CD4-positive, alpha-beta T cell (primary cell): ENCODE measurements at regions of chr17 and their contacts with region 1.

Region 1: GRCh38 chr17:28041068-28041843 is 1.2 kb upstream of the NLK start:
- DNase-seq: peak; percentile 97 to 100 (median 99)
- ATAC-seq: peak; percentile 92
- H3K4me3 ChIP-seq: peak overlapping the region; percentile 84
- H3K4me3 Mint-ChIP-seq: peak overlapping the region; percentile 93
- H3K27ac ChIP-seq: peak overlapping the region; percentile 52 to 69
- H3K27ac Mint-ChIP-seq: peak overlapping the region; percentile 82
- H3K4me1 ChIP-seq: peaks cover 30% of the 10 kb centered on the region
- H3K4me1 Mint-ChIP-seq: peaks cover 57% of the 10 kb centered on the region
- H3K27me3 ChIP-seq: no peaks in the 10 kb centered on the region
- H3K27me3 Mint-ChIP-seq: no peaks in the 10 kb centered on the region
- CTCF ChIP-seq: no peak

Region 2: DNA sequence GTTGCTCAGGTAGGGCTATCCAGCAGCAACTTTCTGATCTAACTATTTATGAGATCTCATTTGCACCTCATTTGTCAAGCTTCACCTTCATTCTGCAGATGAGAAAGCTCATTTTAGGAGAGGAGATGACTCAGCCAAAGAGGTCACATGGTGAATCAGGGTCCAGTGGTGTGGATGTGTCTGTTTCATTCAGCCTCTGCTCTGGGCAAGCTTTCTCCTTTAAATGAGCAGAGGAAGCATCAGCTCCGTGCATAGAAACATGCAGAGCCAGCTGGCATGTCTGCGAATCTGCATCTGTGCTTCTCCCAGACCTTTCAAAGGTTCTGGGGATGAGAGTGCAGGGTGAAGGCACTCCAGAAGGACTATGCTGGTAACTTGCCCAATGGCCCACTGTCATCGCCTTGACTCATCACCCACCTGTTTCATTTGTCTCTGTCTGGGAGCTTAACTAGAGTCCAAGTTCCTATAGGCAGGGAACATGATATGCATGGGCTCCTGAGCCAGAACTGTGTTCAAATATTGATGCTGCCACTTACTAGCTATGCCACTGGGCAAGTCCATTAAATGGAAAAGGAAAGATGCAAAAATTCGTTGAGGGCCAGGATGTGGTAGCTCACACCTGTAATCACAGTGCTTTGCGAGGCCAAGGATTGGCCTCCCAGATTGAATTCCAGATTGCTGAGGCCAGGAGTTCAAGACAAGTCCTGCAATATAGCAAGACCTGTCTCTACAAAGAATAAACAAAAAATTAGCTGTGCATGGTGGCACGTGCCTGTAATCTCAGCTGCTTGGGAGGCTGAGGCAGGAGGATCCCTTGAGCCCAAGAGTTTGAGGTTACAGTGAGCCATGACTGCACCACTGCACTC is 65.9 kb before region 1 on chr17:
- CTCF ChIA-PET with region 1: no interaction called
- POLR2A ChIA-PET with region 1: no interaction called
- intact Hi-C with region 1: no loop called
- DNase-seq: no peak
- ATAC-seq: no peak
- H3K4me3 ChIP-seq: no peak overlapping the region
- H3K4me3 Mint-ChIP-seq: no peak overlapping the region
- H3K27ac ChIP-seq: no peak overlapping the region
- H3K27ac Mint-ChIP-seq: no peak overlapping the region
- H3K4me1 ChIP-seq: no peaks in the 10 kb centered on the region
- H3K4me1 Mint-ChIP-seq: no peaks in the 10 kb centered on the region
- H3K27me3 ChIP-seq: no peaks in the 10 kb centered on the region
- H3K27me3 Mint-ChIP-seq: peaks cover 9% of the 10 kb centered on the region
- CTCF ChIP-seq: no peak

Region 3: DNA sequence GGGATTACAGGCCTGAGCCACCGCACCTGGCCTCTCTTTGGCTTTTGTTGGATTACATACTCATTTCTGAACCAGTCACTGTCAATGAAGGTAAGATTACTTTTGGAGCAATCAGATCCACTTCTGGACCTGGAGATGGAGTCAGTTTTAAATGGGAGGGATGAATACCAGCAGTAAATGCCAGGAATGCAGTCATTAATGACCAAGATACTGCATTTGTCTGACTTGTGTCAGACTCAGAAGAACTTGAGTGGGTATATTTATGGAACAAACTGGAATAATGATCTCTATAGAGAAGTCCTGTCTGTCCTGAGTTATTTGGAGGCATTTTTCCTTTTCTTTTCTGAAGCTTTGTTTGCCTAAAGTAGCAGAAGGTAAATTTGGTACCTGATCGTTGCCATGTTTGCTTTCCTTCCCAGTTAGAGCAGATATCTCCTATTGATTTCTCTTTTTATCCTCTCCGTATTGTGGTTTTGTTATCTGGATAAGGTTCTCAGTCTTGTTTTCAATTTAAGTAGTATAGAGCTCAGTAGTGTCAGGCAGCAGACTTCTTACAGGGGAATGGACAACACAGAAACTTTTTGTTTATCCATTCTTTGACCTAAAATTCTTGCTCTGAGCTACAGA is 11.9 kb after region 1 on chr17:
- CTCF ChIA-PET with region 1: interaction called, 3 read pairs
- POLR2A ChIA-PET with region 1: interaction called, 11 read pairs
- intact Hi-C with region 1: no loop called
- DNase-seq: no peak
- ATAC-seq: no peak
- H3K4me3 ChIP-seq: no peak overlapping the region
- H3K4me3 Mint-ChIP-seq: no peak overlapping the region
- H3K27ac ChIP-seq: no peak overlapping the region
- H3K27ac Mint-ChIP-seq: no peak overlapping the region
- H3K4me1 ChIP-seq: no peaks in the 10 kb centered on the region
- H3K4me1 Mint-ChIP-seq: peaks cover 61% of the 10 kb centered on the region
- H3K27me3 ChIP-seq: no peaks in the 10 kb centered on the region
- H3K27me3 Mint-ChIP-seq: no peaks in the 10 kb centered on the region
- CTCF ChIP-seq: no peak

Region 4: DNA sequence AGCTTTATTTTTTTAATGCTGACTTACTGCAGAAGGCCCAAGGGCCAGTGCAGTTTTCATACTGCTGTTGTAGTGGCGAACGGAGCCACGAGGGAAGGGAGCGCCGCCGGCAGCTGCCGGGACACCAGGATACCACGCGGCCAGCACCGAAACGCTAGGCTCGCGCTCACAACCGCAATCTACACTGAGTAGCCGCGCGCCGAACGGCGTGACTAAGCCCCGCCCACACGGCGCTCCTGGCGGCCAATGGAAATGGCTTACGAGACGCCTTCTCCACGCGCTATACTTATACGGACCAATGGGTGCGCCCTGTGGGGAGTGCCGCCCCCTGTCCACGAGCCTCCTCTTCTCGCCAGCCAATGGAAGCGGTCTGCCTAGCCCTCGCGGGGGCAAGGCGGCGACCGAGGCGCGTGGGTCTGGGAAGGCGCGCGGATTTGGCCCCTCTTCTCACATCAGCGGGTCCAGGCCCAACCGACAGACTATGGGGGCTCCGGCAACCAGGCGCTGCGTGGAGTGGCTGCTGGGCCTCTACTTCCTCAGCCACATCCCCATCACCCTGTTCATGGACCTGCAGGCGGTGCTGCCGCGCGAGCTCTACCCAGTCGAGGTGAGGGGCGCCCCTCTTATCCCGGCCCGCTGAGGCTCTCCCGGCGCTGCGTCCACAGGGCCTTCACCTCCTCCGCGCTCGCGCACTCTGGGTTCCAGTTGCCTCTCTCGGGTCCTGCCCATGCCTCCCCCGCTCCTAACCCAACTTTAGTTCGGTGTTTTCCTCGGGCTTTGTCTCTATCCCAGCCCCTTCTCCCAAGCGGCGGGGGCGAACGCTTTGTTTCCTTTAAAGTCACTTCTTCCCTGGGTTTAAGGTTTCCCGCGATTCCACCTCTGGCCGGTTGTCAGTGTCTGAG is 277.8 kb after region 1 on chr17 and contains the start of gene TMEM97:
- CTCF ChIA-PET with region 1: no interaction called
- POLR2A ChIA-PET with region 1: interaction called, 5 read pairs
- intact Hi-C with region 1: loop called in 1 of 2 experiments (anchors 5 kb)
- DNase-seq: peak; percentile 84 to 97 (median 92)
- ATAC-seq: peak; percentile 98
- H3K4me3 ChIP-seq: peak within 1 kb of the TSS; percentile 73
- H3K4me3 Mint-ChIP-seq: peak within 1 kb of the TSS; percentile 96
- H3K27ac ChIP-seq: no peak within 1 kb of the TSS
- H3K27ac Mint-ChIP-seq: peak within 1 kb of the TSS; percentile 79
- H3K4me1 ChIP-seq: peaks cover 20% of the 10 kb centered on the region
- H3K4me1 Mint-ChIP-seq: peaks cover 24% of the 10 kb centered on the region
- H3K27me3 ChIP-seq: no peaks in the 10 kb centered on the region
- H3K27me3 Mint-ChIP-seq: no peaks in the 10 kb centered on the region
- CTCF ChIP-seq: no peak
- total RNA-seq, gene TMEM97: 2.6 to 3.7 TPM